ENCODE measurements at regions of chr11 and their contacts with region 1.

Region 1: DNA sequence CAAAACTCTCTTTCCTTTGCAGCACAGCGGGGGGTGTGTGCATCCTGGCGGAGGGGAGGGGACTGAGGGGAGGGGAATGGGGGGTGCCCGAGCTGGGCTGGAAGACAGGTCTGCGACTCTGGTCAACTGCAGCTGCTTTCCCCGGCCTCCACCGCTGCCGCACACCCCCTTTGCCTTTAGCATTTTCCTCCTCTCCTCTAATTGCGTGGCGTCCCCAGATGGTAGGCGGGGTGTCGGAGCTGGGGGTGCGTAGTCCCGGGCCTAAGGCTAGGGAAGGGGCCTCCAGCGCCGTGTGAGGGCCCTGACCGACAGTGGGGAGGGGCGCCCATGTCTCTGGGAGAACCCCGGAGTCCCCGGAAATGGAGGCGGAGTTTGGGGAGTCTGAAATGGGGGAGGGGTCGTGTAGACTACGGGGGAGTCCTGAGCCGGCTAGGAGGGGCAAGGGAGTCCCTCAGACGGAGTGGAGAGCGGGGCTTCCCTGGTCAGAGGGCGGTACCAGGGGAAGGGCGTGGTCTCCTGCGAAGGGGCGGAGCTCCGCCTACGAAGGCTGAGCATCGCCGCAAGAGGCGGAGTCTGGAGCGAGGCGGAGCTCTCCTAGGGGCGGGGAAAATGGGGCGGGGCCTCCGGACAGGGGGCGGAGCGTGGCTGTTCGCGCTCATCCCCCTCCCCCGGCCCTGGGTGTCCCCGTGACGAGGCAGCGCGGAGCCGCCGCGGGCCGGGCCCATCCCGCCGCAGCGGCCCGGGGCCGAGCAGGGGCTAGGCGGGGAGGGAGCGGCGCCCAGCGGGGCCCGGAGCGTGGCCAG is at the start of gene PELI3:
- DNase-seq: peak; percentile 98
- ATAC-seq: peak; percentile 88
- H3K4me3 Mint-ChIP-seq: peak within 1 kb of the TSS; percentile 85
- H3K27ac Mint-ChIP-seq: peak within 1 kb of the TSS; percentile 79
- H3K4me1 Mint-ChIP-seq: peaks cover 38% of the 10 kb centered on the region
- H3K27me3 Mint-ChIP-seq: no peaks in the 10 kb centered on the region
- total RNA-seq, gene PELI3: 5.7 to 7.0 TPM

Region 2: DNA sequence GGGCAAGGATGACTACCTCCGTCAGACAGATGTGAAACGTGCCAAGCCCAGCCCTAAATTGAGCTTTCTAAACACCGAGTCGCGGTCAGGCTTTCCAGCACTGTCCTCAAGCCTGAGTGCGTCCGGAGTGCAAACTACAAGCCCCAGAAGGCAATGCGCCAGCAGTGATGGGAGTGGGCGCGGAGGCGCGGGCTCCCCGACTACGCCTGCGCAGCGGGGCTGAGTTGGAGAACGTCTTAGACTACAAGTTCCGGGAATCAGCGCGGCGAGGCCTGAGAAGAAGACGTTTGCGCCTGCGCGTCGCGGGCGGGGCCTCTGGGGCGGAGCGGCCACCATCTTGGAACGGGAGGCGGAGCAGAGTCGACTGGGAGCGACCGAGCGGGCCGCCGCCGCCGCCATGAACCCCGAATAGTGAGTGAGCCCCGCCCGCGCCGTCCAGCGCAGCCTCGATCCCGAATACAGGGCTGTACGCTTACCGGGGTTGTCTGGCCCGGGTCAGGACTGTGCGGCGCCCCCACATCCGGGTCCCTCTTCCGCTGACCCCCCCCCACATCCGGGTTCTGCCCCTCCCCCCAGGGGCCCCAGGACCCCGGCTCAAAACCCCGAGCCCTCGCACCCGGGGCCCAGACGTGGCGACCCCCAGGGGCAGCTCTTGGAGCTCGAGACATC is 198.0 kb before region 1 on chr11 and contains the start of gene RAB1B:
- CTCF ChIA-PET with region 1: no interaction called
- POLR2A ChIA-PET with region 1: no interaction called
- intact Hi-C with region 1: loop called in 1 of 2 experiments (anchors 1 kb)
- DNase-seq: peak; percentile 100
- ATAC-seq: peak; percentile 88
- H3K4me3 Mint-ChIP-seq: peak within 1 kb of the TSS; percentile 100
- H3K27ac Mint-ChIP-seq: peak within 1 kb of the TSS; percentile 97
- H3K4me1 Mint-ChIP-seq: peaks cover 28% of the 10 kb centered on the region
- H3K27me3 Mint-ChIP-seq: no peaks in the 10 kb centered on the region
- total RNA-seq, gene RAB1B: 114 to 147 TPM

Region 3: DNA sequence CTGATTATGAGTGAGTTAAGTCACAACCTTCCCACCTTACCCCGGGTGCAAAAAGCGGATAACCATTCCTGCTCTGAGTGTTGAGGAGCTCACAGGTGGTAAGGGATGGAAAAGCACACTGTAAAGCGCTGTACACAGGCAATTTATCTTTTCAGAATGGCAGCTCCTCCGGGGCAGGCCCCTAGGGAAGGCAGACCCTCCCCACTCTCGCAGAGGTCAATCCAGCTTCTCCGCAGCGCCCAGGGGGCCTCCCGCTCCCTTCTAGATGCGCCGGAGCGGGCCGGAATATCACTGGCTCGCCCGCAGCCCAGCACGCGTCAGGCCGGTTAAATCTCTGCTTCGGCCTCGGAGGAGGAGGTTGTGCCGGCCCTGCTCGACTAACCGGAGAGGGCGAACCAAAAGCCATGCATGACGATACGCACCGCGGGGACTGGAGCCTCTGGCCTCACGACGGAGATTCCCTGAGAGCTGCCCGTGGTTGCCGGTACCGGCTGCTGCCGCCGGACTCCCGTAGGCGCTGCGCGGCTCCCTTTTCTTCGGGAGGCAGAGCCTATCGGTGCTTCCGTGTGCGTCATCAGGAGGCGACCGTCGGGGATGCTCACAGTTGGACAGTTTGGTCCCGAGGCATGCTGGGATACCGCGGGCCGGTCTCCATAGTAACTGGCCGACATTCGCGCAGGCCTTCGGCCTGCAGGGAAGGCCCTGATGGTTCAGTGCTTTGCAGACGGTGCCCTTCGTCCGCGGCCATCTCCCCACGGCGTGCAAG is 121.7 kb before region 1 on chr11 and contains the start of gene BRMS1:
- CTCF ChIA-PET with region 1: no interaction called
- POLR2A ChIA-PET with region 1: interaction called, 3 read pairs
- intact Hi-C with region 1: loop called in 1 of 2 experiments (anchors 1 kb)
- DNase-seq: peak; percentile 98
- ATAC-seq: peak; percentile 80
- H3K4me3 Mint-ChIP-seq: peak within 1 kb of the TSS; percentile 93
- H3K27ac Mint-ChIP-seq: peak within 1 kb of the TSS; percentile 90
- H3K4me1 Mint-ChIP-seq: peaks cover 45% of the 10 kb centered on the region
- H3K27me3 Mint-ChIP-seq: peaks cover 3% of the 10 kb centered on the region
- total RNA-seq, gene BRMS1: 29.2 to 30.2 TPM

Region 4: GRCh38 chr11:66408488-66409214 is 57.8 kb before region 1 on chr11:
- CTCF ChIA-PET with region 1: interaction called, 3 read pairs
- POLR2A ChIA-PET with region 1: no interaction called
- intact Hi-C with region 1: loop called in 1 of 2 experiments (anchors 1 kb)
- DNase-seq: peak; percentile 97
- ATAC-seq: peak; percentile 86
- H3K4me3 Mint-ChIP-seq: peak overlapping the region; percentile 67
- H3K27ac Mint-ChIP-seq: no peak overlapping the region
- H3K4me1 Mint-ChIP-seq: peaks cover 2% of the 10 kb centered on the region
- H3K27me3 Mint-ChIP-seq: peaks cover 20% of the 10 kb centered on the region

Region 5: GRCh38 chr11:66438504-66439466 is 27.6 kb before region 1 on chr11 and contains the start of gene MRPL11:
- CTCF ChIA-PET with region 1: interaction called, 4 read pairs
- POLR2A ChIA-PET with region 1: interaction called, 12 read pairs
- intact Hi-C with region 1: loop called (anchors 1 to 2 kb)
- DNase-seq: peak; percentile 94
- ATAC-seq: peak; percentile 99
- H3K4me3 Mint-ChIP-seq: peak within 1 kb of the TSS; percentile 85
- H3K27ac Mint-ChIP-seq: peak within 1 kb of the TSS; percentile 98
- H3K4me1 Mint-ChIP-seq: peaks cover 8% of the 10 kb centered on the region
- H3K27me3 Mint-ChIP-seq: no peaks in the 10 kb centered on the region
- total RNA-seq, gene MRPL11: 115 to 120 TPM

Region 6: DNA sequence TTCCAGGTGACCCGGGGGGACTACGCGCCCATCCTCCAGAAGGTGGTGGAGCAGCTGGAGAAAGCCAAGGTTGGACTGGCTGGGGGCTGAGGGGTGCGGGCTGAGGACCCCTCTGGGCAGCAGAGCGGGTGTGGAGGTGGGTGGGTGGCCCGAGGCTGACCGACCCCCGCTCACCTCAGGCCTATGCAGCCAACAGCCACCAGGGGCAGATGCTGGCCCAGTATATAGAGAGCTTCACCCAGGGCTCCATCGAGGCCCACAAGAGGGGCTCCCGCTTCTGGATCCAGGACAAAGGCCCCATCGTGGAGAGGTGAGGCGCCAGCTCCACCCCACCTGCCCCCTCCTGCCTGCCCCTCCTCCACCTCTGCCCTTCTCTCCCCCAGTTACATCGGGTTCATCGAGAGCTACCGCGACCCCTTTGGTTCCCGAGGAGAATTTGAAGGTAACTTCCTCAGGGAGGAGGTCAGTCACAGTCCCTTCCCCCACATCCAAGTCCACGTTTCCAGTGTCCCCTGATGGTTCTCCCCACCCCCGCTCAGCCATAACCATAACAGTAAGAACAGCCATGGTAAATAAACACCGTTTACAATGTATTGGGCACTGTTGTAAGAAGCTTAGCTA is 25.0 kb after region 1 on chr11:
- CTCF ChIA-PET with region 1: no interaction called
- POLR2A ChIA-PET with region 1: no interaction called
- intact Hi-C with region 1: no loop called
- DNase-seq: no peak
- ATAC-seq: no peak
- H3K4me3 Mint-ChIP-seq: no peak overlapping the region
- H3K27ac Mint-ChIP-seq: no peak overlapping the region
- H3K4me1 Mint-ChIP-seq: no peaks in the 10 kb centered on the region
- H3K27me3 Mint-ChIP-seq: no peaks in the 10 kb centered on the region

Region 7: DNA sequence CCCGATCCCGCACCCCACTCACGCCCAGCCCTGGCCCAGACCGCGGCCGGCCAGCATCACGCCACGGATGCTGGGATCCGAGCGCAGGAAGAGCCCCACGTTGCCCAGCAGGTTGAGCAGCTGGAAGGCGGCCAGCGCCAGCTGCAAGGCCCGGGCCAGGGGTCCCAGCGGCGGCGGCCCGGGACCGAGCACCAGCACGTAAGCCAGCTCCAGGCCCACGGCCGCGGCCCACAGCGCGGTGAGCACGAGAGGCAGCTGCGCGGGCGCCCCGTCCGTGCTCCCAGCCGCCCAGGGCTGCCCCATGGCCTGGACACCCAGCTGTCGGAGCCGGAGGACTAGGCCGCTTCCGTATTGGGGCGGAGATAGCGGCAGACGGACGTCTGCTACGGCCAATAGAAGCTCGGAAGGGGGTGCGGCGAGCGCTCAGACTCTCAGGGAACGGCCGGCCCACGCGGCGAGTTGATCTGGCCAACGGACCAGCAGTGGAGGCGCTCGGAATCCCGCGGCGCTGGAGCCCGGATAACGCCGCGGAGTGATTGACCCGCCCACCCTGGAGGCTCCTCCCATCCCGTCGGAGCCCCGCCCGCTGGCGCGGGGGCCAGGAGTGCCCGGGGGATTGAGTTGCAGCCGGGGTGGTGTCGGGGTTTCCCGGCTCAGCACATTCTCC is 79.4 kb after region 1 on chr11 and contains the start of gene ZDHHC24:
- CTCF ChIA-PET with region 1: no interaction called
- POLR2A ChIA-PET with region 1: no interaction called
- intact Hi-C with region 1: loop called in 1 of 2 experiments (anchors 1 kb)
- DNase-seq: peak; percentile 95
- ATAC-seq: peak; percentile 94
- H3K4me3 Mint-ChIP-seq: peak within 1 kb of the TSS; percentile 76
- H3K27ac Mint-ChIP-seq: peak within 1 kb of the TSS; percentile 67
- H3K4me1 Mint-ChIP-seq: peaks cover 20% of the 10 kb centered on the region
- H3K27me3 Mint-ChIP-seq: peaks cover 5% of the 10 kb centered on the region
- total RNA-seq, gene ZDHHC24: 9.7 to 11.3 TPM

Region 8: GRCh38 chr11:66855574-66856495 is 389.4 kb after region 1 on chr11:
- CTCF ChIA-PET with region 1: no interaction called
- POLR2A ChIA-PET with region 1: no interaction called
- intact Hi-C with region 1: loop called in 1 of 2 experiments (anchors 1 kb)
- DNase-seq: peak; percentile 94
- ATAC-seq: peak; percentile 83
- H3K4me3 Mint-ChIP-seq: peak overlapping the region; percentile 82
- H3K27ac Mint-ChIP-seq: peak overlapping the region; percentile 73
- H3K4me1 Mint-ChIP-seq: peaks cover 11% of the 10 kb centered on the region
- H3K27me3 Mint-ChIP-seq: no peaks in the 10 kb centered on the region